HCT116 (cell line): ENCODE measurements at regions of chr10 and their contacts with region 1.

Region 1: GRCh38 chr10:112140110-112140970 is 43.2 kb downstream of the GPAM start:
- DNase-seq: peak; percentile 95
- ATAC-seq: peak; percentile 96
- H3K4me3 ChIP-seq: peak overlapping the region; percentile 11 to 13; a peak in 2 of 4 replicates
- H3K27ac ChIP-seq: no peak overlapping the region
- H3K4me1 ChIP-seq: peaks cover 2 to 15% of the 10 kb centered on the region in 2 experiments; a peak in 3 of 4 replicates
- H3K27me3 ChIP-seq: no peaks in the 10 kb centered on the region
- CTCF ChIP-seq: peak; percentile 99 to 100 (median 99)
- POLR2A ChIP-seq: no peak
- RAD21 ChIP-seq: peak; percentile 96

Region 2: DNA sequence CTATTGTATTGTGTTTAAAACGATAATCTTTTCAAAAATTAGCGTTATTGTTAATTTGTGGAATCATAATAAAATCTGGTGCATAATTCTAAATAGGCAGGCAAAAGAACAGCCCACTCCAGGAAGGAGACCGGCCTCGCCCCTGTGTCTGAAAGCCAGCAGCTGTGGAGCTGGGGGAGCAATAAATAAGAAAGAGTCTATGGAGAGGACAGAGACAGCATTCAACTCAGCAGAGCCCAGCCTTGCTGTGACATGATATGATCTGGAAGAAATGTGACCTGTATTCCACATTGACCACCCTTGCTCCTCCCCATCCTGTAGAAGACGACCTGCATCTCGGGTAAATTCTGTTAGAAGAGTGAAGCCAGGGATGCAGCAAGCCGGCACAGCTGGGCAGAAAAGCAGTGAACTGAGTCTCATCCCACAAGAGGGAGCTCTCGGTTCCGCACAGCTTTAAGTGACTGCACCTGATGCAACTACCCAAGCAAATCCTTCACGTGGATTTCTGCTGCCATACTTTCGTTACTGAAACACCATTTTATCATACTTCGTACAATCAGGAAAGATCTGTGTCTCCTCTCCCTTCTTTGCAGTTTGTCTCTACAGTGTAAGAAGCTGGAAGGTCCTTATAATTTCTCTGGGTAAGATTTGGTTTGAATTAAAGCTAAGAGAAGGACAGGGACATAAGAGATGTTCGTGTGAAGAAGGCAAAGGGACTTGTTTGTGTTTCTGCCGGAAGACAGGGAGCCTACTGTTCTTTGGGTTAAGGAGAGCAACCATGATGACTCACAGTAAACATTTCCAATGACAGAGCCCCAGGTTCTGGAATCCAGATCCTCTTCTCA is 383.9 kb before region 1 on chr10:
- CTCF ChIA-PET with region 1: interaction called, 33 read pairs
- POLR2A ChIA-PET with region 1: interaction called, 3 read pairs
- RAD21 ChIA-PET with region 1: interaction called in 1 of 2 experiments, 4 read pairs
- intact Hi-C with region 1: loop called (anchors 1 kb)
- DNase-seq: peak; percentile 79
- ATAC-seq: peak; percentile 98
- H3K4me3 ChIP-seq: no peak overlapping the region
- H3K27ac ChIP-seq: no peak overlapping the region
- H3K4me1 ChIP-seq: peaks cover 0 to 7% of the 10 kb centered on the region in 2 experiments; a peak in 2 of 4 replicates
- H3K27me3 ChIP-seq: peaks cover 8% of the 10 kb centered on the region; the same call in 1 of the 2 replicates
- CTCF ChIP-seq: peak; percentile 63 to 81 (median 70)
- POLR2A ChIP-seq: no peak
- RAD21 ChIP-seq: peak; percentile 76

Region 3: GRCh38 chr10:112115799-112116385 is 24.4 kb before region 1 on chr10:
- CTCF ChIA-PET with region 1: interaction called, 62 read pairs
- POLR2A ChIA-PET with region 1: no interaction called
- RAD21 ChIA-PET with region 1: interaction called, 4 to 6 read pairs
- intact Hi-C with region 1: loop called (anchors 1 kb)
- DNase-seq: peak; percentile 42
- ATAC-seq: peak; percentile 98
- H3K4me3 ChIP-seq: no peak overlapping the region
- H3K27ac ChIP-seq: no peak overlapping the region
- H3K4me1 ChIP-seq: no peaks in the 10 kb centered on the region
- H3K27me3 ChIP-seq: peaks cover 4% of the 10 kb centered on the region
- CTCF ChIP-seq: peak; percentile 82 to 99 (median 97)
- POLR2A ChIP-seq: no peak
- RAD21 ChIP-seq: peak; percentile 73

Region 4: DNA sequence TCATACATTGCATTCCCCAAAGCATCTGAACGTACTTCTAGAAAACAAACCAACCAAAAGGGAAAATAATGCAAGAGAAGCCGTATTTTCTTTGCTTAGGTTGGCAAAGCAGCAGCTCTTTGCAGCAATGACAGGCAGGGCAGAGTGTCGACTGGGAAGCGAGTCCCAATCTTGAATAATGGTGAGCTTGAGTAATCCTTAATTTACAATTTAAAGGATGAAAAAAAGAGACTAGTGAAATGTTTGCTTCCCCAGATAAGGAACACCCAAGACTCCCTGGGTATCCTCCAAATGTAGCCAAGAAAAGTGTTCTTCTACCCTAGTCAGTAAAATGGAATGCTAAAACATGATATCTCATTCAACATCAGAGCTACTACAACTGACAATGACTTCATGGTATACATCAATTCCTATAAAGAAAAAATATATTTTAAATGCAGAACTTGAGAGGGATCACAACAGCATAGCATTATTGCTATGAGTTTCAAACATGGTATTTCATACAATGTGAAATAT is 11.2 kb after region 1 on chr10:
- CTCF ChIA-PET with region 1: interaction called, 10 read pairs
- POLR2A ChIA-PET with region 1: no interaction called
- RAD21 ChIA-PET with region 1: no interaction called
- intact Hi-C with region 1: no loop called
- DNase-seq: no peak
- ATAC-seq: no peak
- H3K4me3 ChIP-seq: no peak overlapping the region
- H3K27ac ChIP-seq: no peak overlapping the region
- H3K4me1 ChIP-seq: no peaks in the 10 kb centered on the region
- H3K27me3 ChIP-seq: no peaks in the 10 kb centered on the region
- CTCF ChIP-seq: no peak
- POLR2A ChIP-seq: no peak
- RAD21 ChIP-seq: no peak

Region 5: DNA sequence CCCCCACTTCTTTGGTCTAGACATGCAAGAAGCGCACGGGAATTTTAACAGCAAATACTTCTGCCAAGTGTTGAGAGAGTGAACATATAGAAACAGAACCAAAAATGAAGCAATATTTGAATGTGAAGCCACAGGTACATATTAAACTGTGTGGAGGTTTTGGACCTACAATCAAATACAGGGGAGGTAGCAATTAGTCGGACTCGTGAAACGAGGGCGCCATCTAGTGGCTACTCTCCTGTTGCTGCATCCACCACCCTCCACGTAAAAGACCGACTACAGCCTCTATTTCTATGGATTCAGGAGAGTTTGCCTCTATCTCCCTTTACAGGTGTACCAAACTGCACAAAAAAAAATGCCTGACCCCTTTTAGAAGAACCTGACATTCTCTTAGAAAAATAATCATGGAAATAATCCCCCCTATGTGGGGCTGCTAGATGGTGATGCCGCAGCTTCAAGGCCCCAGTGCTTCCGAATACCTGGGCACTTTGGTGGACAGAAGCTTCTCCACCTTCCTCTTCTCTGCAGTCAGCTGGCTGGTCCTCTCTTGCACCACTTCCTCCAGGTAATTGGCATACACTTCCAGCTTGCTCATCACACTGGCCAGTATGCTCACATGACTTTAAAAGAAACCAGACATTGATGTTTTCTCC is 174.6 kb after region 1 on chr10:
- CTCF ChIA-PET with region 1: interaction called, 31 read pairs
- POLR2A ChIA-PET with region 1: no interaction called
- RAD21 ChIA-PET with region 1: interaction called, 3 to 4 read pairs
- intact Hi-C with region 1: loop called (anchors 1 kb)
- DNase-seq: peak; percentile 72
- ATAC-seq: peak; percentile 95
- H3K4me3 ChIP-seq: no peak overlapping the region
- H3K27ac ChIP-seq: no peak overlapping the region
- H3K4me1 ChIP-seq: peaks cover 0 to 18% of the 10 kb centered on the region in 2 experiments; a peak in 1 of 4 replicates
- H3K27me3 ChIP-seq: no peaks in the 10 kb centered on the region
- CTCF ChIP-seq: peak; percentile 87 to 99 (median 98)
- POLR2A ChIP-seq: no peak
- RAD21 ChIP-seq: peak; percentile 96